Mammary epithelial cell (primary cell): ENCODE measurements at regions of chr4 and their contacts with region 1.

Region 1: GRCh38 chr4:10281996-10282395 is 165.4 kb upstream of the WDR1 start:
- DNase-seq: peak; percentile 58
- H3K4me3 ChIP-seq: no peak overlapping the region
- H3K27ac ChIP-seq: peak overlapping the region; percentile 91
- H3K4me1 ChIP-seq: peaks cover 51% of the 10 kb centered on the region
- H3K27me3 ChIP-seq: no peaks in the 10 kb centered on the region
- CTCF ChIP-seq: no peak

Region 2: GRCh38 chr4:10395971-10396580 is 114.1 kb after region 1 on chr4:
- CTCF ChIA-PET with region 1: no interaction called
- dilution Hi-C with region 1: no loop called
- in situ Hi-C with region 1: loop called in 1 of 2 experiments (anchors 10 kb)
- intact Hi-C with region 1: loop called (anchors 2 kb)
- DNase-seq: peak; percentile 89
- H3K4me3 ChIP-seq: no peak overlapping the region
- H3K27ac ChIP-seq: peak overlapping the region; percentile 68
- H3K4me1 ChIP-seq: peaks cover 26% of the 10 kb centered on the region
- H3K27me3 ChIP-seq: no peaks in the 10 kb centered on the region
- CTCF ChIP-seq: no peak

Region 3: GRCh38 chr4:10457255-10457801 is 175.3 kb after region 1 on chr4 and contains the start of gene ZNF518B:
- CTCF ChIA-PET with region 1: no interaction called
- dilution Hi-C with region 1: no loop called
- in situ Hi-C with region 1: no loop called
- intact Hi-C with region 1: no loop called
- DNase-seq: peak; percentile 55
- H3K4me3 ChIP-seq: peak within 1 kb of the TSS; percentile 20 to 64 (median 50)
- H3K27ac ChIP-seq: no peak within 1 kb of the TSS
- H3K4me1 ChIP-seq: peaks cover 7% of the 10 kb centered on the region
- H3K27me3 ChIP-seq: peaks cover 6% of the 10 kb centered on the region
- CTCF ChIP-seq: no peak
- total RNA-seq, gene ZNF518B: 16.1 to 31.8 TPM